Colonic mucosa (tissue), 4 donors: ENCODE measurements at regions of chr18 and their contacts with region 1.

Region 1: DNA sequence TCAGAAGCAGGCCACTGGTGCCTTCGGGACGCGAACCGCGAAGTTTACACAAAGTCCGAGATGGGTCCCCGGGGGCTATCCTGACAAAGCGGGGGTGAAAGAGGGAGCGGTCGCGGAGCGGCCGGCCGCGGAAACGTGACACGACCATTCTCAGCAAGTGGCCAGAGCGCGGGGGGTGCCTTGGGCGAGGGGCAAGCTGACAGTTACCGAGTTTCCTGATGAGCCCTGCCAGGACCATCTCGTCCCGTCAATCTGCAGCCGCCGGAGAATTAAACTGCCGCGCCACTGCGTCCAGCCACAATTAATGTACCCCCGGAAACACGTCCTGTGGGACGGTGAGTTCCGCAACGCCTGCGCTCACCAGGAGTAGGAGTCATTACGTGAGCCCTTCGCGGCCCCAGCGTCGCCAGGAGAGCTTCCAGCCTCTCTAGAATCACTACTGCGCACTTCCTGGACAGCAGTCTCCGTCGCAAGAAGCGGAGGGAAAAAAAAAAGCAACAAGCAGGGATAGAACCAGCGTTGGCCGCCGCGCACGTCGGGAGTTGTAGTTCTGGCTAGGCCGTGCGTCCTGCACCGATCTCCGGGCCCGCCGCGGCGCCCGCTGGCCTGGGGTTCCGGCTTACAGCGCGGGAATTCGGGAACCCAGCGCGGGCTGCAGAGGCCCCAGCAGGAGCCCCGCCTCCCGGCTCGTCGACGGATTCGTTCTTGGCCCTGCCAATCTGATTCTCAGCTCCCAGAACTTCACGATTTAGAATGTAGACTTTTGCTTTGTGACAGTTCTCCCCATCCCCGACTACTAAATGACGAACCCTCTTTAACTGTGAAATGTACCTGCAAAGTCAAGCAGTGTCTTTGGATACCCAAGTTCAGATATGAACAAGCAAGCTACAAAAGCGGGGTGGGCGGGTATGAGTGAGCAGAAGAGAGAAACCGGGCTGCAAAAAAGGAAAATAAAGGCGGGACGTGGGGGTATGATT is at the start of gene RTTN:
- DNase-seq: peak; percentile 94
- H3K4me3 ChIP-seq: peak within 1 kb of the TSS; percentile 81
- H3K27ac ChIP-seq: peak within 1 kb of the TSS; percentile 98
- H3K4me1 ChIP-seq: no peaks in the 10 kb centered on the region
- H3K27me3 ChIP-seq: no peaks in the 10 kb centered on the region
- CTCF ChIP-seq: no peak
- total RNA-seq, gene RTTN: 6.5 to 16.7 TPM

Region 2: DNA sequence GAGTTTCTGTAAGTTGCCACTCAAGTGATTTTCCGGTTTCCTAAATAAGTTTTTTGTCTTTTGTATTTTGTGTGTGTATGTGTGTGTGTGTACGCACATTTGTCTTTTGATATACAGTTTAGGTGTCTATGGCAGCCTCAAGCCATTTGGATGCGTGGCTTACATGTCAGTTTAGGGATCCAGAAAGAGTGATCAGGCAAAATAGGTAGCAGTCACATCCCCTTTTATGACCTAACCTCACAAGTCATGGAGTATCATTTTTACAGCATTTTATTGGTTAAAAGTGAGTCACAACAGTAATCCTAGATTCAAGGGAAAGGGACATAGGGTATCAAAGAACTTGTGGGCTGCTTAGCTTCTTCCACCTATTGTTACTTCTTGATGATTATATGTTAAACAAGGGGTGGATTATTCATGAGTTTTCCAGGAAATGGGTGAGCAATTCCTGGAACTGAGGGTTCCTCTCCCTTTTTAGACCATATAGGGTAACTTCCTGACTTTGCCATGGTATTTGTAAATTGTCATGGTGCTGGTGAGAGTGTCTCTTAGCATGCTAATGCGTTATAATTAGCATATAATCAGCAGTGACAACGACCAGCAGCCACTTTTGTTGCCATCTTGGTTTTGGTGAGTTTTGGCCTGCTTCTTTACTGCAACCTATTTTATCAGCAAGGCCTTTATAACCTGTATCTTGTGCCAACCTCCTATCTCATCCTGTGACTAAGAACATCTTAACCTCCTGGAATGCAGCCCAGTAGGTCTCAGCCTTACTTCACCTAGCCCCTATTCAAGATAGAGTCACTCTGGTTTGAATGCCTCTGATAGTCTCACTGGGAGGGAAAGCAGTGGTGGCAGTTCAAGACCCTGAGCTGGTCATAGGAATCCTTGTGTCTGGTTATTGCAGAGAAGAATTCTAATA is 74.6 kb after region 1 on chr18:
- intact Hi-C with region 1: loop called (anchors 5 kb)
- DNase-seq: peak; percentile 45
- H3K4me3 ChIP-seq: no peak overlapping the region
- H3K27ac ChIP-seq: no peak overlapping the region
- H3K4me1 ChIP-seq: no peaks in the 10 kb centered on the region
- H3K27me3 ChIP-seq: no peaks in the 10 kb centered on the region
- CTCF ChIP-seq: no peak

Region 3: DNA sequence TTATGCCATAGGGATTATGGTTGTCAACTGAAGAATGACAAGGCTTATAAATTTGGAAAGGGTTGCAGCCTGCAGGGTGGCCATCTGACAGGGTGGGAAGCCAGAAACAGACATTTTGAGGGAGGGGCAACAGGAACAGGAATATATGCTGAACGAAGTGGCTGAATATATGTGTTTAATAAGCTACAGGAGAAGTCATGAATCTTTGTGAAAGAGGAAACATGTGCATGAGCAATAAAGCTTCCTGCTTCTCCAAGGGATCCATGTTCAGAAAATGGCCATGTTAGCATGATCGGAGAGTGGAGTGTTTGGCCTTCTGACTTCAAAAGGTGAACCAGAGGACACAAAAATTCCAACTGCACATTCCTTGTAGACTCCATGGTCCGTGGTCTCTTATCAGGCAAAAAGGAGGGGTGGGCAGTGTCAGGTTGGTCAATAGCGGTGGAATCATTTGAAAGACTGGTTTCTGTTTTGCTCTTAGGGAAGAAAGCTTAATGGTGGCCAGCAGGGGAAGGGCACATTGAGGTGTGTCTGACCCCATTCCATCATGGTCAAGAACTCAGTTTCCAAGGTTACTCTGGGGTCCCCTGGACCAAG is 227.2 kb after region 1 on chr18:
- intact Hi-C with region 1: no loop called
- DNase-seq: no peak
- H3K4me3 ChIP-seq: no peak overlapping the region
- H3K27ac ChIP-seq: no peak overlapping the region
- H3K4me1 ChIP-seq: no peaks in the 10 kb centered on the region
- H3K27me3 ChIP-seq: no peaks in the 10 kb centered on the region
- CTCF ChIP-seq: no peak